GM12878 (cell line): ENCODE measurements at regions of chr1 and their contacts with region 1.

Region 1: GRCh38 chr1:53811414-53811851 is 26.7 kb downstream of the NDC1 start:
- DNase-seq: no peak
- ATAC-seq: 0 out of 3 replicates have a peak, but pooled peaks have one; percentile 27
- H3K4me3 ChIP-seq: no peak overlapping the region
- H3K27ac ChIP-seq: no peak overlapping the region
- H3K4me1 ChIP-seq: no peaks in the 10 kb centered on the region
- H3K27me3 ChIP-seq: no peaks in the 10 kb centered on the region
- CTCF ChIP-seq: peak; percentile 11 to 33 (median 24); a peak in 4 of 6 replicates
- EP300 ChIP-seq: no peak
- POLR2A ChIP-seq: no peak
- RAD21 ChIP-seq: no peak

Region 2: DNA sequence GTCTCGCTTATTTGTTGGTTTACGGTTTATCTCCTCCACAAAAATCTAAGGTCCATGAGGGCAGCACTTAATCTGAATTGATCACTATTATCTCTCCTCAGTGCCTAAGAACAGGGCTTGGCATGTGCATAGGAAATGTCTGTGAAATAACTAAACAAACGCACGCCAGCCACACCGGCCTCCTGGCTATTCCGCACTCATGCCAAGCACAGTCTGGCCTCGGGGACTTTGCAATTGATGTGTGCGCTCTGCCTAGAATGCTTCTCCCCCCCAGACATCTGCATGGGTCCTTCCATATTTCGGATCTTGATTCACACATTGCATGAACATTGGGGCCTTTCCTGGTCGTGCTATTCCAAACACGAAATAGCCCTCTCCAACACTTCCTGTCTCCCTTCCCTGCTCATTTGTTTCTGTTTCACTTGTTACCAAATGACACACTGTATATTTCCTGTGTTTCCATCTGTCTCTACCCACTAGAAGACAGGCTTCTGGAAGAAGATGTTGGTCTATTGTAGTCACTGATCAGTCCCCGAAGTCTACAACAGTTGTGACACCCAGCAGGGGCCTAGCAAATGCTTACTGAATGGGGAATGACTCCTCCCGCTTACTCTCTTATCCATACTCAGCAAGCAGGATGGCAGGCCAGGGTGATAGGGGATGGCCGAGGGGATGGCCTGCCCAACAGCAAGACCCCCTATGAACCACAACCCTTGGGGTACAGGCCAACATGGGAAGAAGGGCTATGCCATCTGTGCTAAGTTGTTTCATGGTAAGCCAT is 166.3 kb before region 1 on chr1:
- CTCF ChIA-PET with region 1: no interaction called
- POLR2A ChIA-PET with region 1: no interaction called
- RAD21 ChIA-PET with region 1: no interaction called
- SMC1A ChIA-PET with region 1: no interaction called
- in situ Hi-C with region 1: no loop called
- intact Hi-C with region 1: no loop called
- DNase-seq: no peak
- ATAC-seq: no peak
- H3K4me3 ChIP-seq: no peak overlapping the region
- H3K27ac ChIP-seq: no peak overlapping the region
- H3K4me1 ChIP-seq: no peaks in the 10 kb centered on the region
- H3K27me3 ChIP-seq: peaks cover 0 to 1% of the 10 kb centered on the region in 2 experiments; a peak in 1 of 4 replicates
- CTCF ChIP-seq: no peak
- EP300 ChIP-seq: no peak
- POLR2A ChIP-seq: no peak
- RAD21 ChIP-seq: no peak

Region 3: GRCh38 chr1:53787655-53788054 is 23.8 kb before region 1 on chr1:
- CTCF ChIA-PET with region 1: no interaction called
- POLR2A ChIA-PET with region 1: no interaction called
- RAD21 ChIA-PET with region 1: no interaction called
- SMC1A ChIA-PET with region 1: no interaction called
- in situ Hi-C with region 1: no loop called
- intact Hi-C with region 1: no loop called
- DNase-seq: no peak
- ATAC-seq: no peak
- H3K4me3 ChIP-seq: no peak overlapping the region
- H3K27ac ChIP-seq: no peak overlapping the region
- H3K4me1 ChIP-seq: no peaks in the 10 kb centered on the region
- H3K27me3 ChIP-seq: no peaks in the 10 kb centered on the region
- CTCF ChIP-seq: no peak
- EP300 ChIP-seq: no peak
- POLR2A ChIP-seq: no peak
- RAD21 ChIP-seq: no peak

Region 4: DNA sequence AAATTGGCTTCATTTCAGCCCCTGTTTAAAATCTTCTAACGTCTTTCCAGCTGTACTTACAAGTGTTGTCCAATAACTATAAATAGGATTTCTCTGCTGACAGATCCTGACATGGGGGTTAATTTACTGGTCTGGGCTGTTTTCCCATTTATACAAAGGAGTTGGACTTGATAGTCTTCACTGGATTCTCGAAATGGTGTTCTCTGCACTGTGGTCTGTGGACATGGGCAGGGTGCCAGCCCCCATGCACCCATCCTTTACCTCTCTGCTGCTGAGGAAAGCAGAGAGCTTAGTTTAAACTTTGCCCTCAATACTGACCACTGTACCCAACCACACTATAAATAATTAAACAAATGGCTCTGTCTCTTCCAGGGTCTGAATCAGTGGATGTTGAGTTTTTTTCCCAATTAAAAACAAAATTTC is 87.8 kb after region 1 on chr1:
- CTCF ChIA-PET with region 1: no interaction called
- POLR2A ChIA-PET with region 1: interaction called, 10 read pairs
- RAD21 ChIA-PET with region 1: no interaction called
- SMC1A ChIA-PET with region 1: no interaction called
- in situ Hi-C with region 1: no loop called
- intact Hi-C with region 1: no loop called
- DNase-seq: no peak
- ATAC-seq: peak; percentile 48; the same call in 2 of the 3 replicates
- H3K4me3 ChIP-seq: no peak overlapping the region
- H3K27ac ChIP-seq: no peak overlapping the region
- H3K4me1 ChIP-seq: no peaks in the 10 kb centered on the region
- H3K27me3 ChIP-seq: no peaks in the 10 kb centered on the region
- CTCF ChIP-seq: no peak
- EP300 ChIP-seq: no peak
- POLR2A ChIP-seq: no peak
- RAD21 ChIP-seq: no peak